T-cell (primary cell): ENCODE measurements at regions of chr3 and their contacts with region 1.

Region 1: GRCh38 chr3:45858809-45859543 is 17.1 kb upstream of the LZTFL1 start:
- DNase-seq: no peak
- ATAC-seq: no peak
- H3K4me3 ChIP-seq: no peak overlapping the region
- H3K4me3 Mint-ChIP-seq: no peak overlapping the region
- H3K27ac ChIP-seq: no peak overlapping the region
- H3K27ac Mint-ChIP-seq: no peak overlapping the region
- H3K4me1 ChIP-seq: peaks cover 0 to 9% of the 10 kb centered on the region in 2 experiments
- H3K4me1 Mint-ChIP-seq: peaks cover 24 to 29% (median 26%) of the 10 kb centered on the region in 3 donors
- H3K27me3 ChIP-seq: peaks cover 0 to 3% of the 10 kb centered on the region in 2 experiments
- H3K27me3 Mint-ChIP-seq: peaks cover 8 to 23% of the 10 kb centered on the region in 2 donors

Region 2: GRCh38 chr3:45464336-45465170 is 394.4 kb before region 1 on chr3:
- CTCF ChIA-PET with region 1: no interaction called
- POLR2A ChIA-PET with region 1: no interaction called
- DNase-seq: peak in 32 of 35 experiments; percentile 3 to 73 (median 44)
- ATAC-seq: peak in 3 of 4 experiments; percentile 37 to 87 (median 49)
- H3K4me3 ChIP-seq: peak overlapping the region in 1 of 2 donors; percentile 19
- H3K4me3 Mint-ChIP-seq: peak overlapping the region in 1 of 3 donors; percentile 25
- H3K27ac ChIP-seq: no peak overlapping the region
- H3K27ac Mint-ChIP-seq: peak overlapping the region in 1 of 2 donors; percentile 48
- H3K4me1 ChIP-seq: peaks cover 12 to 17% of the 10 kb centered on the region in 2 experiments
- H3K4me1 Mint-ChIP-seq: peaks cover 27 to 41% (median 30%) of the 10 kb centered on the region in 3 donors
- H3K27me3 ChIP-seq: no peaks in the 10 kb centered on the region
- H3K27me3 Mint-ChIP-seq: no peaks in the 10 kb centered on the region

Region 3: DNA sequence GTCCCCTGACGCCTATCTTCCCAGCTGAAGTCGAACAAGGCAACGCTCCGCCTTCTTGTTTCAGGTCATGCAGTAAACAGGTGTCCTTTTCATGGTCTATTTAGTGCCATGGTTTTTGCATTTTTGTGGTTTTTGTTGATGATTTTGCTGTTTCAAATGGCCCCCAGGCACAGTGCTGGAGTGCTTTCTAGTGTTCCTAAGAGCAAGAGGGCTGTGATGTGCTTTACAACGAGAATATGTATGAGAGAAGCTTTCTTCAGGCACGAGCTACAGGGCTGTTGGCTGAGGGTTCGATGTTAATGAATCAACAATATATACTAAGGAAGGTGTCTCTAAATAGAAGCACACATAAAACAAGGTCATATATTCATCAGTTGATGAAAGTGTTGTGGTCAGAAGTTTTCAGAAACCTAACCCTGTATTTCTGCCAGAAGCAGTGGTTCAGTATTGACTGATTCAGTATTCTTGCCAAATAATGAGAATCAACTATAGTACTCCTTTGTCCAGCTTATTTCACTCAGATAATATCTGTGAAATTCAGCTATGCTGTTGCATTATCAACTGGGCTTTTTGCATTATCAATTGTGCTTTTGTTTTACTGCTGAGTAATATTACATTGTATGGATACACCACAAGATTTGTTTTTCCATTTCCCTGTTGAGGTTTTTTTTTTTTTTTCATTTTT is 245.9 kb before region 1 on chr3:
- CTCF ChIA-PET with region 1: no interaction called
- POLR2A ChIA-PET with region 1: no interaction called
- DNase-seq: no peak
- ATAC-seq: no peak
- H3K4me3 ChIP-seq: no peak overlapping the region
- H3K4me3 Mint-ChIP-seq: no peak overlapping the region
- H3K27ac ChIP-seq: no peak overlapping the region
- H3K27ac Mint-ChIP-seq: no peak overlapping the region
- H3K4me1 ChIP-seq: peaks cover 2 to 19% of the 10 kb centered on the region in 2 experiments
- H3K4me1 Mint-ChIP-seq: peaks cover 28 to 64% (median 56%) of the 10 kb centered on the region in 3 donors
- H3K27me3 ChIP-seq: no peaks in the 10 kb centered on the region
- H3K27me3 Mint-ChIP-seq: no peaks in the 10 kb centered on the region

Region 4: DNA sequence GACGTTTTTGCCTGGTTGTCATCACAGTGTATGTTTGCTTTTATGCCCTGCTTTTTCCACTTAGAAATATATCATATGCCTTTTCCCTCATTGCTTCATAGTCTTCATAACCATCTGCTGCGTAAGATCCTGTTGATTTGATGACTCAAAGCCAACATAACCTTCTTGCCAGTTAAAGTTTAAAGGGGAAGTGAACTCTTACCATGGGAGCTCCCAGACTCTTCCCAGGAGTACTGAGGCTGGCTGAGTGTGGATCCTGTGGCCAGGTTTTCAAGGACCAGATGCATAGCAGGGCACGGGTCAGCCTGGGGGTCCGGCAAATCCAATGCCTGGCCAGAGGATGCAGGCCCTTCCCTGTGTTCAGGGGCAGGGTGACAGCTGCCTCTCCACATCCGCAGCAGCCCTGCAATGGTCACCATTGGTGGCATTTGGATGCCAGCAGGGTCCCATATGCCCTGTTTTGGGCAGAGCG is 211.8 kb before region 1 on chr3:
- CTCF ChIA-PET with region 1: no interaction called
- POLR2A ChIA-PET with region 1: interaction called in 1 of 2 experiments, 11 read pairs
- DNase-seq: no peak
- ATAC-seq: no peak
- H3K4me3 ChIP-seq: no peak overlapping the region
- H3K4me3 Mint-ChIP-seq: no peak overlapping the region
- H3K27ac ChIP-seq: no peak overlapping the region
- H3K27ac Mint-ChIP-seq: peak overlapping the region in 1 of 2 donors; percentile 6
- H3K4me1 ChIP-seq: no peaks in the 10 kb centered on the region
- H3K4me1 Mint-ChIP-seq: peaks cover 3 to 9% (median 4%) of the 10 kb centered on the region in 3 donors
- H3K27me3 ChIP-seq: no peaks in the 10 kb centered on the region
- H3K27me3 Mint-ChIP-seq: no peaks in the 10 kb centered on the region

Region 5: GRCh38 chr3:45817831-45818522 is 41.0 kb before region 1 on chr3:
- CTCF ChIA-PET with region 1: no interaction called
- POLR2A ChIA-PET with region 1: no interaction called
- DNase-seq: no peak
- ATAC-seq: no peak
- H3K4me3 ChIP-seq: no peak overlapping the region
- H3K4me3 Mint-ChIP-seq: no peak overlapping the region
- H3K27ac ChIP-seq: no peak overlapping the region
- H3K27ac Mint-ChIP-seq: no peak overlapping the region
- H3K4me1 ChIP-seq: no peaks in the 10 kb centered on the region
- H3K4me1 Mint-ChIP-seq: peaks cover 0 to 6% (median 0%) of the 10 kb centered on the region in 3 donors
- H3K27me3 ChIP-seq: no peaks in the 10 kb centered on the region
- H3K27me3 Mint-ChIP-seq: no peaks in the 10 kb centered on the region